CD14-positive monocyte (primary cell): ENCODE measurements at regions of chr12 and their contacts with region 1.

Region 1: GRCh38 chr12:131949431-131950181 is at the start of gene EP400:
- DNase-seq: peak; percentile 93 to 96 (median 94)
- H3K4me3 ChIP-seq: peak within 1 kb of the TSS; percentile 58 to 88 (median 78)
- H3K4me3 Mint-ChIP-seq: peak within 1 kb of the TSS; percentile 94 to 97
- H3K27ac ChIP-seq: peak within 1 kb of the TSS in 1 of 2 donors; percentile 77
- H3K27ac Mint-ChIP-seq: peak within 1 kb of the TSS; percentile 62 to 94 (median 90)
- H3K4me1 ChIP-seq: peaks cover 16 to 23% of the 10 kb centered on the region in 2 donors
- H3K4me1 Mint-ChIP-seq: peaks cover 34% of the 10 kb centered on the region
- H3K27me3 ChIP-seq: no peaks in the 10 kb centered on the region
- H3K27me3 Mint-ChIP-seq: peaks cover 0 to 3% (median 1%) of the 10 kb centered on the region in 3 donors
- CTCF ChIP-seq: peak; percentile 58
- polyA plus RNA-seq, gene EP400: 0.65 to 12.1 (median 0.81) TPM

Region 2: DNA sequence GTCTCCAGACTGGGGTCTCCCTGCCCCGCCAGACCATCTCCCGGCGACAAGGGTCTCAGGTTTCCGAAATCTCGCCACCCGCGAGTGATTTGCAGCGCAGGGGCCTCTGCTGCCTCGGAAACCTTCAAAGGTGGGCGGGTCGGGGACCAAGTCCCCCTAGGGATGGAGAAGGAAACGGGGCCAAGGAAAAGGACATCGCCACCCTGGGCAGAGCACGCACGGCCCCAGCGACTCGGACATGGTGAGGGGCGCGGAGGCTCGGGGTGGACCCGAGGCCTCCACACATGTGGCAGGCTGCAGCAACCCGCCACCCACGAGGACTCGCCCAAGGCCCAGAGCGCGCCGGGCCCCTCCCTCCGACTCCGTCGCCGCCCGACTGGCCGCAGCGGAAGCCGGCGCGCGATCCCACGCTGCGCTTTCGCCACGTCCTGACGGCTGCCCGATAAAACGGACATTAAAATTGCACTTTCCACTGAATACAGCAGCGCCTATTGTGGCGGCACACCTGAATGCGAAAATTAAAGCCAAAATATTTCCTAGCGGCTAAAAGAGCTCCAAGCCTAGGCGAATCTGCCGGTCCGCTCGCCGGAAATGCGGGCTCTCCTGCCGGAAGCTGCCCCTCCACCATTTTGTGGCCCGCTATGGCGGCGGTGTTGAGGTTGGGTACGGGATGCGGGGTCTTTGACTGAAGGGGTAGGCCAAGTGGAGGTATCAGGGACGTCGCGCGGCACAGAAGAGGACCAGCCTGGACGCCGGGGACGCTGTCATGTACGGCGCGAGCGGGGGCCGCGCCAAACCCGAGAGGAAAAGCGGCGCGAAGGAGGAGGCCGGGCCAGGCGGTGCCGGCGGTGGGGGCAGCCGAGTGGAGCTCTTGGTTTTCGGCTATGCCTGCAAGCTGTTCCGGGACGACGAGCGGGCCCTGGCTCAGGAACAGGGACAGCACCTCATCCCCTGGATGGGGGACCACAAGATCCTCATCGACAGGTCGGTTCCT is 238.8 kb before region 1 on chr12 and contains the start of gene SFSWAP:
- intact Hi-C with region 1: loop called in 1 of 2 experiments (anchors 10 kb)
- DNase-seq: peak; percentile 67 to 73 (median 73)
- H3K4me3 ChIP-seq: peak within 1 kb of the TSS; percentile 83 to 98 (median 95)
- H3K4me3 Mint-ChIP-seq: peak within 1 kb of the TSS; percentile 96 to 99
- H3K27ac ChIP-seq: peak within 1 kb of the TSS; percentile 73 to 98
- H3K27ac Mint-ChIP-seq: peak within 1 kb of the TSS; percentile 92 to 99 (median 98)
- H3K4me1 ChIP-seq: peaks cover 21 to 22% of the 10 kb centered on the region in 2 donors
- H3K4me1 Mint-ChIP-seq: peaks cover 20% of the 10 kb centered on the region
- H3K27me3 ChIP-seq: no peaks in the 10 kb centered on the region
- H3K27me3 Mint-ChIP-seq: peaks cover 0 to 2% (median 0%) of the 10 kb centered on the region in 3 donors
- CTCF ChIP-seq: no peak
- polyA plus RNA-seq, gene SFSWAP: 7.3 to 33.0 (median 10.7) TPM

Region 3: DNA sequence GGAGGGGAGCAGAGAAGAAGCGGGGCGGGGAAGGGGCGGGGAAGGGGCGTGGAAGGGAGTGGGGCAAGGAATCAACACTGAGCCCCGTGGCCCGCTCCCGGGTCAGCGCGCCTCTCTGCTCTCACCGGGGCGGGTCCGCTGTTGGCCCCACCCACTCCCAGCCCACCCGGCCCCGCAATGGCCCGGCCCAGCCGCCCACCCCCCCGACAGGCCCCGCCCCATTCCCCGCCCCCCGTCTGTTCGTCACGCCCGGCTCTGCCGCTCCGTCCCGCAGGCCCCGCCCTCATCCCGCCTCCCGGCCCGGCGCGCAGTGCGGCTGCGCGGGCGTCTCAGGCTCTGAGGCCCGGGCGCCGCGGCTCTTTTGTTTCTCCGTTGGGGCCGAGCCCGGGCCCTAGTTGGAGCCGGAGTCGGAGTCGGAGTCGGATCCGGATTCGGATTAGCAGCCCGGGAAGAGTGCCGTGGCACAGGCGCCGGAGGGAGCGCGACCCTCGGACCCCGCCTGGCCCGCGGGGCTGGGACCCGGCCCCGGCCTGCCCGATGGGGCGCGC is 55.2 kb before region 1 on chr12 and contains the start of gene ULK1:
- intact Hi-C with region 1: loop called (anchors 1 to 5 kb)
- DNase-seq: peak; percentile 82 to 84 (median 83)
- H3K4me3 ChIP-seq: peak within 1 kb of the TSS; percentile 63 to 94 (median 89)
- H3K4me3 Mint-ChIP-seq: peak within 1 kb of the TSS; percentile 87 to 93
- H3K27ac ChIP-seq: peak within 1 kb of the TSS; percentile 55 to 94
- H3K27ac Mint-ChIP-seq: peak within 1 kb of the TSS; percentile 87 to 95 (median 91)
- H3K4me1 ChIP-seq: peaks cover 20 to 24% of the 10 kb centered on the region in 2 donors
- H3K4me1 Mint-ChIP-seq: peaks cover 21% of the 10 kb centered on the region
- H3K27me3 ChIP-seq: no peaks in the 10 kb centered on the region
- H3K27me3 Mint-ChIP-seq: peaks cover 0 to 4% (median 3%) of the 10 kb centered on the region in 3 donors
- CTCF ChIP-seq: no peak
- polyA plus RNA-seq, gene ULK1: 1.0 to 75.1 (median 1.3) TPM

Region 4: DNA sequence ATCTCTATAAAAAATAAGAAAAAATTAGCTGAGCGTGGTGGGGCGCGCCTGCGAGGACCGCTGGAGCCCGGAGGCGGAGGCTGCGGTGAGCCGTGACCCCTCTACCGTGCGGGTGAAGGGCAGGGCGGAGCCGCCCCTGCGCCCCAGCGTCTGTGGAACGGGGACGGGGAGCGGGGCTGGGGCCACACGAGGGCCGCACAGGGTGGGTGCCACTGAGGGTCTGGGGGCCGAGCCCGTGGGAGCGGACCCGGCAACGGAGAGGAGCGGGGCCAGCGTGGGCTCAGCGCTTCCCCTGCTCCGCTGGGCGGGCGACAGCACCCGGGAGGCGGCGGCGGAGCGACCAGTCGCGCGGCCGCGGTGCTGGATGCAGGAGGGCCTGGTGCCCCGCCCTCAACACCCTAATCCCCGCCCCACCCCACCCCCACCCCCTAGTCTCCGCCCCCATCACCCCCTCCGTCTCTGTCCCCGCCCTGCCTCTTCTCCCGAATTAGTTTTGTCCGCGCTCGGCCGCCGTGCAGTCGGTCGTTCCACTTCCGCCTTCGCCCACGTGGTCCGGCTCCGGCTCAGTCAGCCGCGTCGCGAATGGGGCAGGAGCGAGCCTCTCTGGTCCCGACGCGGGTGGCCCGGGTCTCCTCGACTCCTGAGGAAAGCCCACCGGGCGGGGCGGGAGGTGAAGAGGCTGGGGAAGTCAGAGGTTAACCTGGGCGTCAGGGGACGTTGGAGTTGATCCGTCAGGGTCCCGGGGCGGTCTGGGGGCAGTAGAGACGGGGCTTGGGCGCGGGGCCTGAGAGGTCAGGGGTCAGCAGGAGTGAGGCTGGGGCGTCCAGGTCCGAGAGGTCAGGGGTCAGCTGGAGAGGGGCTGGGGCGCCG is 20.7 kb before region 1 on chr12 and contains the start of gene PUS1:
- intact Hi-C with region 1: loop called (anchors 2 kb)
- DNase-seq: peak; percentile 88 to 94 (median 94)
- H3K4me3 ChIP-seq: peak within 1 kb of the TSS; percentile 73 to 96 (median 82)
- H3K4me3 Mint-ChIP-seq: peak within 1 kb of the TSS; percentile 89 to 93
- H3K27ac ChIP-seq: peak within 1 kb of the TSS; percentile 12 to 89
- H3K27ac Mint-ChIP-seq: peak within 1 kb of the TSS; percentile 88 to 95 (median 90)
- H3K4me1 ChIP-seq: peaks cover 25 to 28% of the 10 kb centered on the region in 2 donors
- H3K4me1 Mint-ChIP-seq: peaks cover 28% of the 10 kb centered on the region
- H3K27me3 ChIP-seq: no peaks in the 10 kb centered on the region
- H3K27me3 Mint-ChIP-seq: peaks cover 0 to 9% (median 4%) of the 10 kb centered on the region in 3 donors
- CTCF ChIP-seq: no peak
- polyA plus RNA-seq, gene PUS1: 5.1 to 30.9 (median 6.9) TPM

Region 5: DNA sequence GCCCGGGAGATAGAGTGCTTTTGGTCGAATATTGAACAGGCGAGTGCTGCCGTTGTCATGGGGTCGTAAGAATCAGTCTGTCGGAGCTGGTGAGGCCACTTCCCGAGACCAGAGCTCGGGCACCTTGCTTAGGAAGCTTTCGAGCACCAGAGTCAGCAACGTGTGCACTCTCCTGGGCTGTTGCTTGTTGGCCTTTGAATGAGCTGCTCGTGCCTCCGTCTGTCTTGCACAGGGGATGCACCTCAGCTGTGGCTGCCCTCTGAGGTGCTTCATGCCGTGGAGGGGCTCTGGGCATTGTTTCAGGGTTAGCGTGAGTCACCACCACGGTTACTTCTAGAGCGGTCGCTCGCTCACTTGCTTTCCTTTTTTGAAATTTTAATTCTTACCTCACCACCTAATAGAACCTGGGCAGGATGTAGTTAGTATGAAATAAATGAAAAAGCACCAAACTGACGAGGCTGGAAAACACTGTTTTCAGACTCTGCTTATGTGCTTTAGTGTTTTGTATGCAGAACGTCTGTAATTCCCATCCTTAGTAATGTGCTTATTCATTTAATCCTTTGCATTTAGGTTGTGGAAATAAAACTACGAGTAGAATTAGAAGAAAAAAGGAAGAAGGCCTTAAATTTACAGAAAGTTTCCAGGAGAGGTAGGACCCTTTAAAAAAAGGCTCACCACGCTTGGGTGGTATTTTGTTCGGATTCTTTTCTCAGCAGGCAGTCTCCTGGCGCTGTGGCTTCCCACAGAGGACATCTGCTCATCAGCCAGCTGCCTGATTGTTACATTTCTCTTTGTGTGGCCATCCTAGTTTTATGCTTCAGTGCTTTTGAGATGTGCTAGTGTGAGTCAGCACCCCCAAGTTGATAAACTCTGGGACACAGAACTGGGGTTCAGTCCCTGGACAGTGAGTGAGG is 40.7 kb after region 1 on chr12:
- intact Hi-C with region 1: no loop called
- DNase-seq: no peak
- H3K4me3 ChIP-seq: no peak overlapping the region
- H3K4me3 Mint-ChIP-seq: no peak overlapping the region
- H3K27ac ChIP-seq: peak overlapping the region in 1 of 2 donors; percentile 14
- H3K27ac Mint-ChIP-seq: peak overlapping the region in 2 of 7 donors; percentile 16 to 62
- H3K4me1 ChIP-seq: peaks cover 17 to 18% of the 10 kb centered on the region in 2 donors
- H3K4me1 Mint-ChIP-seq: peaks cover 16% of the 10 kb centered on the region
- H3K27me3 ChIP-seq: no peaks in the 10 kb centered on the region
- H3K27me3 Mint-ChIP-seq: peaks cover 0 to 4% (median 0%) of the 10 kb centered on the region in 3 donors
- CTCF ChIP-seq: no peak

Region 6: GRCh38 chr12:132071040-132071810 is 121.6 kb after region 1 on chr12:
- intact Hi-C with region 1: no loop called
- DNase-seq: no peak
- H3K4me3 ChIP-seq: no peak overlapping the region
- H3K4me3 Mint-ChIP-seq: no peak overlapping the region
- H3K27ac ChIP-seq: no peak overlapping the region
- H3K27ac Mint-ChIP-seq: peak overlapping the region in 4 of 7 donors; percentile 17 to 76 (median 52)
- H3K4me1 ChIP-seq: peaks cover 7 to 8% of the 10 kb centered on the region in 2 donors
- H3K4me1 Mint-ChIP-seq: peaks cover 14% of the 10 kb centered on the region
- H3K27me3 ChIP-seq: no peaks in the 10 kb centered on the region
- H3K27me3 Mint-ChIP-seq: no peaks in the 10 kb centered on the region
- CTCF ChIP-seq: no peak

Region 7: DNA sequence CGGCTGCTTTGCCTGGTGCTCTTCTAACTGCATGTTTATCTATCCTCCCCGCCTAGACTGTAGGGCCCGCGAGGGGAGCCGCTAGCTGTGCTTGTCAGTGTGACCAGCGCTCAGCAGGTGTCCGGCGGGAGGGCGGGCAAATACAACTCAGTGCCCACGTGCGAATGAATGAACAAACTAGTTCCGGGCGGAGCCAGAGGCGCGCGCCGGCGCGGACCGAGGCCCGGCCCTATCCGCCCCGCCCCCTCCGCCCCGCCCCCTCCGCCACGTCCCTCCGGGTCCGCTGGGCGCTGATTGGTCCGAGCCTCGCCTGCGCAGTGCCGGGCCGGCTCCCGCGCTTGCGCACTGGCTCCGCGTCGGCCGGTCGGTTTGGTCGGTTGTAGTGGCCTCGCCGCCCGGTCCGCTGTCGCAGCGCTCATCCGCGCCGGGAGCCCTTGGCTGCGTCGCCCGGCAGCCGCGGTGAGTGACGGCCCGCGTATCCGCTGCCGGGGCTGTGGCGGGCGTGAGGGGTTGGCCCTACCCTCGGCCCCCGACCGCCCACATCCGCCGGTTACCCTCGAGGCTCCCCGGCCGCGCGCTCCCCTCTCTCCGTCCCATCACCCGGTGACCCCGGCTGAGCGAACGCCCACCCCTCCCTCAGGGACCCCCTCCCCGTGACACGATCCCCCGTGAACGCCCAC is 134.5 kb after region 1 on chr12:
- intact Hi-C with region 1: loop called in 1 of 2 experiments (anchors 10 kb)
- DNase-seq: peak; percentile 87 to 91 (median 90)
- H3K4me3 ChIP-seq: peak overlapping the region; percentile 58 to 82 (median 77)
- H3K4me3 Mint-ChIP-seq: peak overlapping the region; percentile 67 to 90
- H3K27ac ChIP-seq: peak overlapping the region; percentile 29 to 87
- H3K27ac Mint-ChIP-seq: peak overlapping the region in 6 of 7 donors; percentile 24 to 89 (median 72)
- H3K4me1 ChIP-seq: peaks cover 14 to 15% of the 10 kb centered on the region in 2 donors
- H3K4me1 Mint-ChIP-seq: peaks cover 18% of the 10 kb centered on the region
- H3K27me3 ChIP-seq: no peaks in the 10 kb centered on the region
- H3K27me3 Mint-ChIP-seq: peaks cover 0 to 2% (median 0%) of the 10 kb centered on the region in 3 donors
- CTCF ChIP-seq: no peak